ENCODE measurements at regions of chr7 and their contacts with region 1.

Region 1: GRCh38 chr7:140653319-140654108 is 12.9 kb upstream of the DENND2A start:
- DNase-seq: peak; percentile 49
- CTCF ChIP-seq: peak; percentile 79

Region 2: DNA sequence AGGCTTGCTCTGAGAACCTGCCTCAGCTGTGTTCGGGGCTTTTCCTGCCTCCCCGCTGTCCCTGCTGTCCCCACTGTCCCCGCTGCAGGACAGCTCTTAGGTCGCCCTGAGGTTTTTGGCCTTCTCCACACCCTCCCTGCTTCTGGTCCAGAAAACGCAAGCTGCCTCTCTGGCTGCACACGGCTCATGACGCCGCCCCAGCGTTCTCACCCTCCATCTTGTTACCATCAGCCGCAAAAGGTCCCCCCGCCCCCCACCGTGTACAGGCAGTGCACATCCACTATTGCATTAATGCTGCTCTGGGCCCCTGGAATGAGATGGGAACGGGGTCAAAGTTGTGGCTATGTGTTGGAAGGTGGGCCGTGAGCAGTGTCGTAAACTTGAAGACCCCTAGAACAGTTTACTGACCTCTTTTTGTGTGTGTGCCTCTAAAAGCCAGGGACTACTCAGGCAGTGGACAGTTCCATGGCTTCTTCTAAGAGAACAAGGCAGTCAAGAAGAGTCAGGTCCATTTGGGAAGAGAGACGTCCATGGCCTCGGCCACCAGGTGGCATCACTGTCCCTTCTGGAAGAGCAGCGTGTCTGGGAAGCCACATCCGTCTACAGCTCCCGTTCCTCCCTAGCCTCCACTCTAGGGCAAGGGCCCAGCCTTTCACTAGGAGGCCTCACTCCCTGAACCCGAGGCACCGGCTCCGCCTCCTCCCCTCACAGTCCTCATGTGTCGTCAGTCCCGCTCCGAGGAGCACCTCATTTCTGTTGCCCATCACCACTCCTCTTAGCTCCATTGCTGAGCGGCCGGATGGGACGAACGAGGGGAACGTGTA is 135.8 kb before region 1 on chr7:
- CTCF ChIA-PET with region 1: interaction called, 39 read pairs
- POLR2A ChIA-PET with region 1: no interaction called
- DNase-seq: peak; percentile 83
- CTCF ChIP-seq: peak; percentile 85

Region 3: GRCh38 chr7:140686921-140687320 is 33.4 kb after region 1 on chr7:
- CTCF ChIA-PET with region 1: no interaction called
- POLR2A ChIA-PET with region 1: no interaction called
- DNase-seq: no peak
- CTCF ChIP-seq: no peak

Measured in GM10248 (cell line).